Naive thymus-derived CD8-positive, alpha-beta T cell (primary cell): ENCODE measurements at regions of chr13 and their contacts with region 1.

Region 1: DNA sequence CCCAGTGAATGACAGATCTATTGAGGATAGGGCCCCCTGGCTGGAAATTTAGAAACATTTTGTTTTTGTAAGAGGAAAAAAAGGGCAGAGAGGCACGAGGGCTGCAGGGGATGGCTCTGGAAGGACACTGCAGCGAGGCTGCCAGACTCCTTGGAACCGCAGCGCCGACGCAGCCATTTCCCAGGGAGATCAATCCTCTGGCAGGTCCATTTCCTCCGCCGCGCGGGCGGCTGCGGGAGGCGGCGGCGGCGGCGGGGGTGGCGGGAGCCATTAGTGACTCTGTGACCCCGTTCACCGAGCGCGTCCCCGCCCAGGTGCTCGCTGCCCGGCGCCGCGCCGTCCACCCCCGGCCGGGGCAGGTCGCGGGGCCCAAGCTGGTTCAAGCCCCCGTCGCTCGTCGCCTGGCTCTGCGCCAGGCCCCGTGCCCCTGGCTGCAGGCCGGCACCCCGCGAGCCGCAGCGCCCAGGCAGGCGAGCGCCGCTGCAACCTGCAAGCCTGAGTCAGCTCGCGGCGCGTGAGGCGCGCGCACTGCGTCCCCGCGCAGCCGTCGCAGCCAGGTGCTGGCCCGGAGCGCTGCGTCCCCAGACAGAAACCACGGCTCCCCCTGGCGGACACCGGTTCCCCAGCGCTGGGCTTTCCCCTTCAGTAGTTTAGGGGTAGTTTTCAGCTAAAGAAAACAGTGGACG is 192.6 kb downstream of the KATNAL1 start:
- DNase-seq: peak; percentile 81 to 94 (median 92)
- ATAC-seq: peak; percentile 93 to 95
- H3K4me3 Mint-ChIP-seq: peak overlapping the region; percentile 78 to 91 (median 84)
- H3K27ac Mint-ChIP-seq: peak overlapping the region in 9 of 10 donors; percentile 27 to 89 (median 63)
- H3K4me1 Mint-ChIP-seq: peaks cover 21 to 31% (median 30%) of the 10 kb centered on the region in 4 donors
- H3K27me3 Mint-ChIP-seq: no peaks in the 10 kb centered on the region

Region 2: GRCh38 chr13:29771247-29771646 is 343.5 kb before region 1 on chr13:
- POLR2A ChIA-PET with region 1: interaction called, 10 read pairs
- DNase-seq: peak in 3 of 10 donors; percentile 54 to 60 (median 59)
- ATAC-seq: peak; percentile 59 to 68
- H3K4me3 Mint-ChIP-seq: no peak overlapping the region
- H3K27ac Mint-ChIP-seq: no peak overlapping the region
- H3K4me1 Mint-ChIP-seq: peaks cover 2 to 6% (median 3%) of the 10 kb centered on the region in 4 donors
- H3K27me3 Mint-ChIP-seq: no peaks in the 10 kb centered on the region